Mammary epithelial cell (primary cell): ENCODE measurements at regions of chr12 and their contacts with region 1.

Region 1: DNA sequence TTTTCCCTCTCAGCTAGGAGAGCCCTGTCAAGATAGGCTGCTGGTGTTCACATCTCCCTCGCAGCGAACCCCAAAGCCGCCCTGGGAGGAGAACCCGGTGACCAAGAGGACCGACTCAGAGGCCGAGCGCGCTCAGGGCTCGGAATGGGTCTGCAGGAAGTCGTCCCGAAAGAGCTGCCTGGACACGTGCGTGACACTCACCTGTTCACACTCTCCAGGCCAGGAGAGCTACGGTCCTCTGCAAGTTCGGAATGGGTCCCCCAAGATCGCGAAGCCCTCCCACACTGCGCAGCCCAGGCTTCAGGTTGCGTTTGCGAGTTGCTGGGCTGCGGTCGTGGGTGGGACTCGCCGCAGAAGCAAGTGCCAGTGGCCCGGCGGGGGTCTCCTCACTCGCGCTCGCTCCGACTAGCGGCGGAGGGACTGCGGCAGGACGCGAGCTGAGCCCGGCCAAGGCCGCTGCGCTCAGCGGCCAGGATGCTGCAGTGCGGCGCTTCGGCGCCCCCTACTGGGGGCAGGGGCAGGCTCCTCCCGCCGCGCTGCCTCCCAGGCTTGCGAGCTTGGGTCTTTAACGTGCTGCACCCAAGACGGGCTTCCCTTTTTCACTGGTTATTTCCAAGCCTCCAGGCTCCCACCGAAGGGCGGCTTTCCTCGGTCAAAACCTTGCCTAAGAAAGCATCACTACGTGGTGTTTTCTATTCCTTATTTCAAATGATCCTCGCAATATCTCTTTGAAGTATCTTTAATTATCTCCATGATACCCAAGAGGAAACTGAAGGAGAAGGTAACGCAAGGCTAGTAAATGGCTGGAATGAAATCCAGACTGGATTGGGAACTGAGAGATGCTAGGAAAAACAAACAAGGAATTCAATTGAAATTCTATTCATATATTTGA is at the start of gene RERG:
- DNase-seq: peak; percentile 54
- H3K4me3 ChIP-seq: peak within 1 kb of the TSS in 2 of 3 experiments; percentile 19 to 43
- H3K27ac ChIP-seq: no peak within 1 kb of the TSS
- H3K4me1 ChIP-seq: peaks cover 4% of the 10 kb centered on the region
- H3K27me3 ChIP-seq: no peaks in the 10 kb centered on the region
- CTCF ChIP-seq: peak; percentile 73 to 99
- total RNA-seq, gene RERG: 0.17 TPM in 1 of 2 donors, not detected in the other

Region 2: GRCh38 chr12:14629832-14630710 is 591.2 kb before region 1 on chr12:
- CTCF ChIA-PET with region 1: no interaction called
- dilution Hi-C with region 1: no loop called
- in situ Hi-C with region 1: no loop called
- intact Hi-C with region 1: loop called (anchors 1 kb)
- DNase-seq: peak; percentile 56
- H3K4me3 ChIP-seq: no peak overlapping the region
- H3K27ac ChIP-seq: no peak overlapping the region
- H3K4me1 ChIP-seq: no peaks in the 10 kb centered on the region
- H3K27me3 ChIP-seq: no peaks in the 10 kb centered on the region
- CTCF ChIP-seq: peak; percentile 99 to 100

Region 3: DNA sequence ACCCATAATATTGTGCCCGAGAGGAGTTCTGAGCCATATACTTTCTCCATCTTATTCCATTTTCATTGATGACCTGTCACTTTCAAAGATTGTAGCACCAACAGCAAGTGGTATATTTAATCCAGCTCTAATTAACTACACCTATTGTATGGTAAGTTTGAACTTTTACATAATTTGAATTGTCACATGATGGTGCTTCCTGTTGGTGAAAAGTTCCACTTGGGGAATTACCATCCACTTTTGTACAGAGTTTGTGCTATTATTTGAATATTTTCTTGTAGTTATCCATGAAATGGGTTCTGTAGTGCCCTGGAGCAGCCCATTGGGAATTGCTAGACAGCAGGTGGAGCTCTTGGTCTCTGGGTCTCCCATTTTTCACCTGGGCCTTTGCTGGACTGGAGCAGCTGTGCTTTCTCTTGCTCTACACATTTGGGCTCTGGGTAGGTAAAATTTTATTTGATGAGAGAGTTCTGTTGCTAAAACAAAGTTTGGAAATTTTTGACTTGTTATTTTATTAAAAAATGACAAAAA is 410.2 kb before region 1 on chr12:
- CTCF ChIA-PET with region 1: interaction called, 5 read pairs
- dilution Hi-C with region 1: no loop called
- in situ Hi-C with region 1: no loop called
- intact Hi-C with region 1: loop called (anchors 1 kb)
- DNase-seq: peak; percentile 19
- H3K4me3 ChIP-seq: no peak overlapping the region
- H3K27ac ChIP-seq: no peak overlapping the region
- H3K4me1 ChIP-seq: no peaks in the 10 kb centered on the region
- H3K27me3 ChIP-seq: no peaks in the 10 kb centered on the region
- CTCF ChIP-seq: peak; percentile 65 to 85

Region 4: GRCh38 chr12:14995583-14996425 is 225.4 kb before region 1 on chr12:
- CTCF ChIA-PET with region 1: no interaction called
- dilution Hi-C with region 1: no loop called
- in situ Hi-C with region 1: loop called in 1 of 2 experiments (anchors 25 kb)
- intact Hi-C with region 1: loop called (anchors 5 kb)
- DNase-seq: peak; percentile 29
- H3K4me3 ChIP-seq: no peak overlapping the region
- H3K27ac ChIP-seq: no peak overlapping the region
- H3K4me1 ChIP-seq: peaks cover 2% of the 10 kb centered on the region
- H3K27me3 ChIP-seq: no peaks in the 10 kb centered on the region
- CTCF ChIP-seq: peak; percentile 61 to 63

Region 5: DNA sequence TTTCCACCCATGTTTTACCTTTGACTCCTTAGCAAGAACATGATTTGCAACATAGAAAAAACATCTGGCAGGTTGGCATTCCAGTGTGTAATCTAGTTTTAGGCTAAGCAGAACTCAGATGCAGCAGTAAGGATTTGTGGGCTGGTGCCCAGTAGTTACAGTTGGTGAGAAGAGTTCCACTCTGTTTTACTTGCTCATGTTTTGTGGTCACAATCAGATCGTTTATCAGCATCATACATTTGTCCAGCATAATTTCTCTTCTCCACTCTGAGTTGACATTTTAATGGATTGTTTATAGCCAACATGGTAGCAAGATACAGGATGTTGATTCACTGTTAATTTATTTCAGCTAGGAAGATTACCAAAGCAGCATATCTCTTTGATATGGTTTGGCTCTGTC is 128.4 kb before region 1 on chr12:
- CTCF ChIA-PET with region 1: no interaction called
- dilution Hi-C with region 1: no loop called
- in situ Hi-C with region 1: no loop called
- intact Hi-C with region 1: no loop called
- DNase-seq: no peak
- H3K4me3 ChIP-seq: no peak overlapping the region
- H3K27ac ChIP-seq: no peak overlapping the region
- H3K4me1 ChIP-seq: no peaks in the 10 kb centered on the region
- H3K27me3 ChIP-seq: no peaks in the 10 kb centered on the region
- CTCF ChIP-seq: no peak

Region 6: GRCh38 chr12:15151161-15152120 is 69.8 kb before region 1 on chr12:
- CTCF ChIA-PET with region 1: interaction called, 4 read pairs
- dilution Hi-C with region 1: no loop called
- in situ Hi-C with region 1: no loop called
- intact Hi-C with region 1: loop called (anchors 1 kb)
- DNase-seq: no peak
- H3K4me3 ChIP-seq: no peak overlapping the region
- H3K27ac ChIP-seq: no peak overlapping the region
- H3K4me1 ChIP-seq: peaks cover 10% of the 10 kb centered on the region
- H3K27me3 ChIP-seq: no peaks in the 10 kb centered on the region
- CTCF ChIP-seq: peak; percentile 28 to 61

Region 7: DNA sequence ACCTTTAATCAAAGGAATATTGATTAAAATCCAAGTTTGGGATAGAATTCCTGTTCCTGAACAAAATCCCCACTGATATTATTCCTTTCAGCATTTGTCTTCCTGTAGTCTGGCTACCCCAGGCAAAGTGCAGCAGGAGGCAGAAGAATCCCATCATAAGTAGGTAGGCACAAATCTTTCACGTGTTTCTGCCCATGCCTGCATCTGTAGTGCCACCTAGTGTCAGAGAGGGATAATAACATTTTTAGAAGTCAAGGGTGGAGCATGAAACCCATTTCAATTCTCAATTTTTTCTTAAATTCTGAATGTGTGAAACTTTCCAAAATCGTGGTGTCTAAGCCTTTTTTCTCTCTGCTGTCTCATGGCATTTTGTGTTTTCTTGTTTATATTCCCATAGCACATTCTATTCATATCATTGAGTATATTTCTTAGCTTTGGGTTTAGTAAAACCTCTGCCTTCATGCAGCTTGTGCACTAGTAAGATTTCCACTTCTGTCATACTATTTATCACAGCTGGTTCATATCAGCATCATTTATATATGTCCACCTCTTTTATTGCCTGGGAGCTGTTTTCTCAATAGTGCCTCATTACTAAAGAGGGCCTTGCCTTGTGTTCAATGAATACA is 47.8 kb after region 1 on chr12:
- CTCF ChIA-PET with region 1: no interaction called
- dilution Hi-C with region 1: no loop called
- in situ Hi-C with region 1: no loop called
- intact Hi-C with region 1: no loop called
- DNase-seq: peak; percentile 50
- H3K4me3 ChIP-seq: no peak overlapping the region
- H3K27ac ChIP-seq: no peak overlapping the region
- H3K4me1 ChIP-seq: peaks cover 5% of the 10 kb centered on the region
- H3K27me3 ChIP-seq: no peaks in the 10 kb centered on the region
- CTCF ChIP-seq: peak; percentile 83 to 89

Region 8: DNA sequence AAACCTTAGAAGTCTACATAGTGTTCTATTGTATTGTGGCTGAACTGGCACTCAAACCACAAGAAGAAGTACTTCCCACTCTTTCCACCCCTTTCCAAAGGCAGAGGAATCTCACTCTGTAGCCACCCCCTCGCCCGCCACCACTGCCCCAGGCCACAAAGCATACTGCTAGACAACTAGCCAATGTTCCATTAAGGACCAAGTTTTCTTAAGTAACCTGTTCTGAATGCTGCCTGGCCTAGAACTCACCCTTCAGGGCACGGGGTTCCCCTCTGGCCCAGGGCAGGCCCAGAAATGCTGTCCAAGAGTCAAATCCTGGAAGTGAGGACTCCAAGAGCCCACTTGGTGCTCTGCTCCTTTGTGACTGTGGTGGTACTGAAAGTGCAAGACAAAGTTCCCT is 85.4 kb after region 1 on chr12:
- CTCF ChIA-PET with region 1: no interaction called
- dilution Hi-C with region 1: no loop called
- in situ Hi-C with region 1: no loop called
- intact Hi-C with region 1: no loop called
- DNase-seq: no peak
- H3K4me3 ChIP-seq: no peak overlapping the region
- H3K27ac ChIP-seq: no peak overlapping the region
- H3K4me1 ChIP-seq: no peaks in the 10 kb centered on the region
- H3K27me3 ChIP-seq: no peaks in the 10 kb centered on the region
- CTCF ChIP-seq: no peak

Region 9: GRCh38 chr12:15856097-15856982 is 635.1 kb after region 1 on chr12:
- CTCF ChIA-PET with region 1: no interaction called
- dilution Hi-C with region 1: no loop called
- in situ Hi-C with region 1: no loop called
- intact Hi-C with region 1: loop called (anchors 10 kb)
- DNase-seq: peak; percentile 41
- H3K4me3 ChIP-seq: no peak overlapping the region
- H3K27ac ChIP-seq: no peak overlapping the region
- H3K4me1 ChIP-seq: peaks cover 10% of the 10 kb centered on the region
- H3K27me3 ChIP-seq: no peaks in the 10 kb centered on the region
- CTCF ChIP-seq: peak; percentile 71 to 73